ENCODE measurements at regions of chr3 and their contacts with region 1.

Region 1: DNA sequence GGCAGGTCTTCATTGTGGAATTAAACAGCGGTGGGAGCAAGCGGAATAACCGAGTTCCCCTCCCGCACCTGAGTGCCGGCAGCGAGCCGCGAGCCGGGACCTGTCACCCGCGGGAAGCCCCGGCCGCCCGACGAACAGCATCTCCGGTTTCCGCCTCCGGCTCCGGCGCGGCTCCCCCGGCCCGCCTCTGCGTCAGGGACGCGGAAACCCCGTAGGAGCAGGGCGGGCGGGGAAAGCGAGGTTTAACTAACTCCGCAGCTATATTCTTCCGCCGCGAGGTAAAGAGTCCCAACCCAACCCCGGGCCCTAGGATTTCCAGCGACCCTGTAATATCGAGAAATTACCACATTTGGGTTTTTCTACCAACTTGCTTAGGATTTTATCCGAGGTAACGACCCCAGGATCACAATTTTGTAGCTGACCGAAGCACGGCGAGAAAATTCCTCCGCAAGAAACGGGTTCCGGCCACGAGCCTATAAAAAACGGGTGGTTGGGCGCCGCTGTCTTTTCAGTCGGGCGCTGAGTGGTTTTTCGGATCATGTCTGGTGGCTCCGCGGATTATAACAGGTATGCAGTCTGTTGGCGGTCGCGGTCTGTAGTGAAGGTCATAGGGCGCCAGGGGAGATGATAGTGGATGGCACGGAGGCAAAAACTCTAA is at the start of gene EIF4A2:
- DNase-seq: peak; percentile 91
- H3K4me3 Mint-ChIP-seq: peak within 1 kb of the TSS; percentile 99
- H3K27ac Mint-ChIP-seq: peak within 1 kb of the TSS; percentile 100
- H3K4me1 Mint-ChIP-seq: peaks cover 40% of the 10 kb centered on the region
- H3K27me3 Mint-ChIP-seq: no peaks in the 10 kb centered on the region
- total RNA-seq, gene EIF4A2: 385 to 388 TPM

Region 2: GRCh38 chr3:186520957-186521842 is 262.0 kb before region 1 on chr3:
- CTCF ChIA-PET with region 1: no interaction called
- POLR2A ChIA-PET with region 1: interaction called, 11 read pairs
- DNase-seq: peak; percentile 34
- H3K4me3 Mint-ChIP-seq: no peak overlapping the region
- H3K27ac Mint-ChIP-seq: no peak overlapping the region
- H3K4me1 Mint-ChIP-seq: peaks cover 41% of the 10 kb centered on the region
- H3K27me3 Mint-ChIP-seq: no peaks in the 10 kb centered on the region

Region 3: DNA sequence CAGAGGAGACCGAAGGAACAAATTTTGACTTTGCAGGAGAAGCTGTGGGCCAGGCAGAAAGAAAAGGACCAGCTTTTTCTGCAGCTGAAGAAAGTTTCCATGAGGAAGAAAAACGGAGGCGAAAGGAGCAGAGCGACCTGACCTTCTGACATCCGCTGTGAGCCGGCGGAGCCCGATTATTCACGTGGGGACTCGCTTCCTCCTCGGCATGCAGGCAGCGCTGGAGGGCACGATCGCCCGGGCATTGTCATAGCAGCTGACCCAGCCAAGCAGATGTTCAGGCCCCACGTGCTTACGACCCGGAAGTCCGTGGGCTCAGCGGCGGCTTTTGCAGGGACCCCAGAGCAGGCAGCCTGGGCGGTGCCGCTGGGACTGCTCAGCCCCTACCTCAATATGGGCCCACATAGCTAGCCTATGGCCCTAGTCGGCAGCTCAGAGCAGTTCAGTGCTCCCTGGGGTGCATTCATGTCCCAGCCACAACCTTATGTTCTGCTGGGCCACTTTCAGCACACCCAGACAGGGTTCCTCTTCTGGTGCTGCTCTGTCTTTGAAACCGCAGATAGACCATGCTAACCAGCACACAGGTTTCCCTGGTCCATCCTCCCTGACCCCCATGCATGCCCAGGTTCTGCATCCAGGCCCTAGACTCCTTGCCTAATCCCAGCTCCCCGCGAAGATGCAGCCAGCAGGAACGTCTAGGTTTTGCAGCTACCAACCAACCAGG is 10.3 kb before region 1 on chr3:
- CTCF ChIA-PET with region 1: interaction called, 15 read pairs
- POLR2A ChIA-PET with region 1: interaction called, 240 read pairs
- DNase-seq: peak; percentile 74
- H3K4me3 Mint-ChIP-seq: peak overlapping the region; percentile 77
- H3K27ac Mint-ChIP-seq: peak overlapping the region; percentile 77
- H3K4me1 Mint-ChIP-seq: peaks cover 16% of the 10 kb centered on the region
- H3K27me3 Mint-ChIP-seq: no peaks in the 10 kb centered on the region

Region 4: GRCh38 chr3:186821429-186822367 is 38.5 kb after region 1 on chr3:
- CTCF ChIA-PET with region 1: interaction called, 3 read pairs
- POLR2A ChIA-PET with region 1: interaction called, 60 read pairs
- DNase-seq: no peak
- H3K4me3 Mint-ChIP-seq: no peak overlapping the region
- H3K27ac Mint-ChIP-seq: no peak overlapping the region
- H3K4me1 Mint-ChIP-seq: peaks cover 22% of the 10 kb centered on the region
- H3K27me3 Mint-ChIP-seq: no peaks in the 10 kb centered on the region

Region 5: DNA sequence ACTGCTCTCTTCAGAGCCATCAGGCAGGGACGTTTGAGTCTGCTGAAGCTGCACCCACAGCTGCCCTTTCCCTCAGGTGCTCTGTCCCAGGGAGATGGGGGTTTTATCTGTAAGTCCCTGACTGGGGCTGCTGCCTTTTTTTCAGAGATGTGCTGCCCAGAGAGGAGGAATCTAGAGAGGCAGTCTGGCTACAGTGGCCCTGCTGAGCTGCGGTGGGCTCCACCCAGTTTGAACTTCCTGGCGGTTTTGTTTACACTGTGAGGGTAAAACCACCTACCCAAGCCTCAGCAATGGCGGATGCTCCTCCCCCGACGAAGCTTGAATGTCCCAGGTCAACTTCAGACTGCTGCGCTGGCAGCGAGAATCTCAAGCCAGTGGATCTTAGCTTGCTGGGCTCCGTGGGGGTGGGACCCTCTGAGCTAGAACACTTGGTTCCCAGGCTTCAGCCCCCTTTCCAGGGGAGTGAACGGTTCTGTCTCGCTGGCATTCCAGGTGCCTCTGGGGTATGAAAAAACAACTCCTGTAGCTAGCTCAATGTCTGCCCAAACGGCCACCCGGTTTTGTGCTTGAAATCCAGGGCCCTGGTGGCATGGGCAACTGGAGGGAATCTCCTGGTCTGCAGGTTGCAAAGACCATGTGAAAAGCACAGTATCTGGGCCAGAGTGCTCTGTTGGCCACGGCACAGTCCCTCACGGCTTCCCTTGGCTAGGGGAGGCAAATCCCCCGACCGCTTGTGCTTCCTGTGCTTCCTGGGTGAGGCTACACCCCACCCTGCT is 126.1 kb after region 1 on chr3:
- CTCF ChIA-PET with region 1: no interaction called
- POLR2A ChIA-PET with region 1: interaction called, 15 read pairs
- DNase-seq: peak; percentile 91
- H3K4me3 Mint-ChIP-seq: peak overlapping the region; percentile 42
- H3K27ac Mint-ChIP-seq: peak overlapping the region; percentile 94
- H3K4me1 Mint-ChIP-seq: peaks cover 44% of the 10 kb centered on the region
- H3K27me3 Mint-ChIP-seq: no peaks in the 10 kb centered on the region

Region 6: GRCh38 chr3:187041362-187042307 is 258.4 kb after region 1 on chr3:
- CTCF ChIA-PET with region 1: no interaction called
- POLR2A ChIA-PET with region 1: interaction called, 17 read pairs
- DNase-seq: peak; percentile 74
- H3K4me3 Mint-ChIP-seq: peak overlapping the region; percentile 50
- H3K27ac Mint-ChIP-seq: peak overlapping the region; percentile 98
- H3K4me1 Mint-ChIP-seq: peaks cover 80% of the 10 kb centered on the region
- H3K27me3 Mint-ChIP-seq: no peaks in the 10 kb centered on the region